ENCODE measurements at regions of chr9 and their contacts with region 1.

Region 1: GRCh38 chr9:114653556-114654159 is 3.9 kb downstream of the TEX53 start:
- DNase-seq: peak; percentile 73 to 80 (median 74)
- ATAC-seq: peak; percentile 81
- H3K4me3 ChIP-seq: no peak overlapping the region
- H3K27ac ChIP-seq: no peak overlapping the region
- H3K4me1 ChIP-seq: no peaks in the 10 kb centered on the region
- H3K27me3 ChIP-seq: no peaks in the 10 kb centered on the region
- CTCF ChIP-seq: peak; percentile 71 to 95 (median 91)
- POLR2A ChIP-seq: no peak

Region 2: DNA sequence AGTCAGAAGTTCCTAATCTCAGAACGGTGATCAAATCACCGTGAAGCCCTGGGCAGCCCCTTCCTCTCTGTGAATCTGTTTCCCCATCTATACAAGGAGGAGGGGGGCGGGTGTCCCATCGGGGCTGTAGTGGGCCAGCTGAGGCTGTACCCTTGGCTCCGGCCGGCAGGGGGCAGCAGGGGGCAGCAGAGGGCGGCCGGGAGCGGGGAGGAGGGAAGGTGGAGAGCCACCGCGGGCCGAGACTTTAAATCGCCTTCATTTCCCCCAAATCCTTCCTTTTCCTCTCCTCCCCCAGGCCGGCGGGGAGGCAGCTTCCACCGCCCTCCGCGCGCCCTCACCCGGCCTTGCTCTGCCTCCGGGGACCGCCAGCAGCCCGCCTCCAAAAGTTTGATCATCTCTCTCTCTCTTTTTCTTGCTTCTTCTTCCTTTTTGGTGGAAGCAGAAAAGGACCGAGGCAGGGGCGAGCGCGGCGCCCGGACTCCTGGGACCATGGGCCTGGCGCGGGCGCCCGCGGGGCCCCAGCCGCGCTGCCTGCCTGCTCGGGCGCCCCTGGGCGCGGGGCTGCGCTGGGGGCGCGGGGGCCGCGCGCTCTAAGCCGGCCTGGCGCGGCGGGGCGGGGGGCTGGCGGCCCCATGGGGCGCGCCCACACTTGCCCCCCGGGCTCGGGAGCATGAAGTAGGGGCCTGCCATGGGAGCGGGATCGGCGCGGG is 498.2 kb before region 1 on chr9 and contains the start of gene COL27A1:
- intact Hi-C with region 1: no loop called
- DNase-seq: peak; percentile 80 to 88 (median 85)
- ATAC-seq: peak; percentile 88
- H3K4me3 ChIP-seq: peak within 1 kb of the TSS; percentile 31 to 50
- H3K27ac ChIP-seq: peak within 1 kb of the TSS in 3 of 4 donors; percentile 42 to 73 (median 72)
- H3K4me1 ChIP-seq: peaks cover 26% of the 10 kb centered on the region
- H3K27me3 ChIP-seq: no peaks in the 10 kb centered on the region
- CTCF ChIP-seq: peak; percentile 91 to 97 (median 93)
- POLR2A ChIP-seq: peak in 2 of 3 donors; percentile 41 to 59
- total RNA-seq, gene COL27A1: 24.1 to 58.0 TPM

Region 3: DNA sequence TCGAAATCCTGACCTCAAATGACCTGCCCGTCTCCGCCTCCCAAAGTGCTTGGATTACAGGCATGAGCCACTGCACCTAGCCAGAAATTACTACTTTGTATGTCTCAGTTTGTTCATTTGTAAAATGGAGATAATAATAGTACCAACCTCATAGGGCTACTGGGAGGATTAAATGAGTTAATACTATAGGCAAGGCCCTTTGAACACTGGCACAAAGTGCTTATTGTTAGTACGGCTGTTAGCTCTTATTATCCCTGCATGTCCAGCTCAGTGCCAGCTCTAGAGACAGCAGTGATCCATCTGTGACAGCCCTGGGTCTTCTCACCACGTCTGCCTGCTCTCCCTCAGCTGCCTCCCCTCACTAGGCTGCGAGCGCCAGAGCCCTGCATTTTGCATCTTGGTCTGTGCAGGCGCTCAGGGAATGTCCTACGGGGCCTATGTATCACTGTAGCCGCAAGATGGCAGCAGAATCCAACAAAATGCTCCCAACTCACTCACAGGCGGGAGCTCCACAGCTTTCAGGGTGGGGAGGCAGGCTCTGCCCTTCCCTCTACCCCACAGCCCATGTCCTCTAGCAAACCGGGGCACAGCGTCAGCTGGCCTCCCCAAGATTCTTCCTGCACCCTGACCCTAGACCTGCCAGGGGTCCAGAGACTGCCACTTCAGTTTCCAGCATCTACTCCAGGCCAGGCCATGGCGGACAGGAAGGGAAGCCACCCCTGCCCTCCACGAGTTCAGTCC is 248.2 kb before region 1 on chr9:
- intact Hi-C with region 1: loop called (anchors 10 kb)
- DNase-seq: peak; percentile 74 to 80 (median 76)
- ATAC-seq: peak; percentile 83
- H3K4me3 ChIP-seq: no peak overlapping the region
- H3K27ac ChIP-seq: no peak overlapping the region
- H3K4me1 ChIP-seq: no peaks in the 10 kb centered on the region
- H3K27me3 ChIP-seq: no peaks in the 10 kb centered on the region
- CTCF ChIP-seq: peak; percentile 60 to 83 (median 74)
- POLR2A ChIP-seq: no peak

Region 4: DNA sequence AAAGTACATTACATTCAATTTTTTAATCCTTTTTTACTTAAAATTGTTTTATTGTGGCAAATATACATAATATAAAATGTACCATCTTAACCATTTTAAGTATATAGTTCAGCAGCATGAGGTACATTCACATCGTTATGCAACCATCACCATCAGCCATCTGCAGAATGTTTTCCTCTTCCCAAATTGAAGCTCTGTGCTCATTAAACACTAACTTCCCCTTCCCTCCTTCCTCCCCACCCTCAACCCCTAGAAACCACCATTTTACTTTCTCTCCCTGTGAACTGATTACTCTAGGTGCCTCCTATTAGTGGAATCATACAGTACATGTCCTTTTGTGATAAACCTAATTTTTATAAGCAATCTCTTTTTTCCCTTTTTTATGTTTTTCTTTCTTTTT is 11.7 kb before region 1 on chr9:
- intact Hi-C with region 1: no loop called
- DNase-seq: no peak
- ATAC-seq: no peak
- H3K4me3 ChIP-seq: no peak overlapping the region
- H3K27ac ChIP-seq: no peak overlapping the region
- H3K4me1 ChIP-seq: no peaks in the 10 kb centered on the region
- H3K27me3 ChIP-seq: no peaks in the 10 kb centered on the region
- CTCF ChIP-seq: no peak
- POLR2A ChIP-seq: no peak

Measured in body of pancreas (tissue), 4 donors.